ENCODE measurements at regions of chr11 and their contacts with region 1.

Region 1: GRCh38 chr11:20278727-20279126 is 84.8 kb upstream of the HTATIP2 start:
- DNase-seq: no peak
- H3K27ac ChIP-seq: no peak overlapping the region
- CTCF ChIP-seq: no peak

Region 2: GRCh38 chr11:19929655-19930054 is 349.1 kb before region 1 on chr11:
- CTCF ChIA-PET with region 1: interaction called, 11 read pairs
- POLR2A ChIA-PET with region 1: no interaction called
- DNase-seq: no peak
- H3K27ac ChIP-seq: no peak overlapping the region
- CTCF ChIP-seq: no peak

Region 3: DNA sequence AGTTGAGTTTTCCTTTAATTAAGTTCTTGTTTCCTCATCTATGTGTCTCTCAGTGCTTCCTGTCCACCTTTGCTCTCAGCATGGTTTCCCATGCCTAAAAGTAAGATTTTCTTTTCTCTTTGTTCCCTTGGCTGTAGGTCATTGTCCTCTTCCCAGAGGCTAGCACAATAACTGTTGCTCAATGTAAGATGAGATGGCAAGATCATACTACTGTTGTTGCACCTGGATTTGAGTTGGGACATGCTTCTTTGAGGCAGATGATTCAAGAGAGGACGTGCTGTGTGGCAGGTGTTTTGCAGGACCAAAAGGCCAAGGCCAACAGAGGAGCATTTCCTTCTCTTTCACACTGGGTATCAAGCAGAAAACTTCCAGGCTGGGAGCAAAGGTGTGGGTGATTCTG is 379.4 kb after region 1 on chr11:
- CTCF ChIA-PET with region 1: no interaction called
- POLR2A ChIA-PET with region 1: no interaction called
- DNase-seq: no peak
- H3K27ac ChIP-seq: no peak overlapping the region
- CTCF ChIP-seq: no peak

Region 4: DNA sequence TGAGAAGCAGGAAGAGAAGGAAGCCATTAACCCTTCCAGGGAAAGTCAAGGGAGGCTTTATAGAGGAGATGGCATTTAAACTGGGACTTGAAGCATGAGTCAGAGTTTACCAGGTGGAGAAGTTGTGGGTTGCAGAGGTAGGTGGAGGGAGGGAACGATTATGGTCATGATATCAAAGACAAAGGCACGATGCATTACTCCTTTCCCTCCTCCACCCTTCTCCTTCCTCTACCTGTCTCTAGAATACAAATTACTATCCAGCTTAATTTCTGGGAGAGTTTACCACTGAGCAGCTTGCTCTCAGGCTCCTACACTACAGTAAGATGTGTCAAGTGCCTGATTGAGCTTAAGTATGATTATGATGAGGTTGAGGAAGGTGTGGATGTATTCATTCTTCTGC is 542.3 kb after region 1 on chr11:
- CTCF ChIA-PET with region 1: no interaction called
- POLR2A ChIA-PET with region 1: no interaction called
- DNase-seq: no peak
- H3K27ac ChIP-seq: no peak overlapping the region
- CTCF ChIP-seq: no peak